PC-9 (cell line): ENCODE measurements at regions of chr10 and their contacts with region 1.

Region 1: DNA sequence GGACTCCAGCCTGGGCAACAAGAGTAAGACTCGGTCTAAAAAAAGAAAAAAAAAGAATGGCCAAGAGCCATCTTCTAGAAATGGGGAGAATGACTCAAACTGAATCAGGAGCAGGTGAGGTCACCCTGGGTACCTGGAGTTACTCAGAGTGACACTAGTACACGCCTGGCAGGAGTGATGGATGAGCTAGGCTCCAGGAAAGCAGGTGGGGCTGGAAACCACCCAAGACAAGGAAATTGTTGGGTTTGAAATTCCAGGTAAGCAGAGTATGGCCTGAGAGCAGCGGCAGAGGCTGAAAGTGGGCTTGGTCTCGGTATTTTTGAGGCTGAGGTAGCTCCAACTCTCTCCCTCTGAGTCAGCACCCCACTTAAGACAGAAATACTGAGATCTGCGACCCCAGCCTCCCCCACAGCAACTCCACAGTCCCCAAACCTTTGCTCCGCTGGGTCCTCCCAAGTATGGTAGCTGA is 18.5 kb downstream of the DDIT4 start:
- DNase-seq: peak; percentile 91 to 99
- H3K4me3 ChIP-seq: peak overlapping the region; percentile 8; the same call in 1 of the 2 replicates
- H3K27ac ChIP-seq: peak overlapping the region; percentile 93
- H3K4me1 ChIP-seq: peaks cover 54% of the 10 kb centered on the region
- H3K27me3 ChIP-seq: no peaks in the 10 kb centered on the region
- CTCF ChIP-seq: no peak

Region 2: GRCh38 chr10:72278668-72279393 is 13.4 kb before region 1 on chr10:
- CTCF ChIA-PET with region 1: interaction called, 11 read pairs
- POLR2A ChIA-PET with region 1: interaction called, 14 read pairs
- intact Hi-C with region 1: no loop called
- DNase-seq: no peak
- H3K4me3 ChIP-seq: no peak overlapping the region
- H3K27ac ChIP-seq: peak overlapping the region; percentile 83; the same call in 1 of the 2 replicates
- H3K4me1 ChIP-seq: peaks cover 25% of the 10 kb centered on the region
- H3K27me3 ChIP-seq: no peaks in the 10 kb centered on the region
- CTCF ChIP-seq: peak; percentile 31; the same call in 1 of the 2 replicates